ENCODE measurements at regions of chr1 and their contacts with region 1.

Region 1: GRCh38 chr1:34742667-34743270 is 12.1 kb upstream of the GJB5 start:
- DNase-seq: peak; percentile 75 to 91 (median 91)
- ATAC-seq: peak; percentile 85 to 90
- H3K4me3 ChIP-seq: no peak overlapping the region
- H3K27ac ChIP-seq: no peak overlapping the region
- H3K4me1 ChIP-seq: no peaks in the 10 kb centered on the region
- H3K27me3 ChIP-seq: no peaks in the 10 kb centered on the region

Region 2: GRCh38 chr1:33633019-33633801 is 1109.6 kb before region 1 on chr1:
- intact Hi-C with region 1: loop called in 2 of 4 experiments (anchors 10 kb)
- DNase-seq: peak; percentile 91 to 96 (median 93)
- ATAC-seq: peak; percentile 83 to 85
- H3K4me3 ChIP-seq: no peak overlapping the region
- H3K27ac ChIP-seq: no peak overlapping the region
- H3K4me1 ChIP-seq: no peaks in the 10 kb centered on the region
- H3K27me3 ChIP-seq: no peaks in the 10 kb centered on the region

Region 3: DNA sequence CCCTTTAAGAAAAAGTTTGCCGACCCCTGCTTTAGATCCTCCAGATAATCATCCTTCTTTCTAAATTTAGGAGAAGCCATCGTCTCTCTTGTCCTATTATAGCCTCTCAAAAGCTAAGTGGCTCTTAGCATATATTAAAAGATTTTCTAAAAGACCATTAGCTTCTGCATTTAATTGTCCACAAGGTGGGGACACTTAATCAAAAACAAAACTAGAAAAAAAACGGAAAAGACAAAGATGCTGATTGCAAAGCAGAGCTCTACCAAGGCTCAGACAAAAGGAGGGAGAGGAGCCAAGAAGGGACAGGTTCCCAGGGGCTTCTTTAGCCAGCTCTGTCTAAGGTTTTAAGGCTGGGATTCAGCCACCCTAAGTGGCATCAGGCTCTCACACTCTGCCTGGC is 1007.1 kb before region 1 on chr1:
- intact Hi-C with region 1: loop called in 1 of 4 experiments (anchors 5 kb)
- DNase-seq: no peak
- ATAC-seq: peak in 1 of 2 donors; percentile 16
- H3K4me3 ChIP-seq: no peak overlapping the region
- H3K27ac ChIP-seq: no peak overlapping the region
- H3K4me1 ChIP-seq: no peaks in the 10 kb centered on the region
- H3K27me3 ChIP-seq: no peaks in the 10 kb centered on the region

Region 4: GRCh38 chr1:34113887-34114286 is 628.9 kb before region 1 on chr1:
- intact Hi-C with region 1: loop called in 1 of 4 experiments (anchors 10 kb)
- DNase-seq: no peak
- ATAC-seq: no peak
- H3K4me3 ChIP-seq: no peak overlapping the region
- H3K27ac ChIP-seq: no peak overlapping the region
- H3K4me1 ChIP-seq: no peaks in the 10 kb centered on the region
- H3K27me3 ChIP-seq: no peaks in the 10 kb centered on the region

Region 5: GRCh38 chr1:34452451-34452850 is 290.3 kb before region 1 on chr1:
- intact Hi-C with region 1: loop called in 1 of 4 experiments (anchors 10 kb)
- DNase-seq: no peak
- ATAC-seq: no peak
- H3K4me3 ChIP-seq: no peak overlapping the region
- H3K27ac ChIP-seq: no peak overlapping the region
- H3K4me1 ChIP-seq: no peaks in the 10 kb centered on the region
- H3K27me3 ChIP-seq: no peaks in the 10 kb centered on the region